ENCODE measurements at regions of chr7 and their contacts with region 1.

Region 1: DNA sequence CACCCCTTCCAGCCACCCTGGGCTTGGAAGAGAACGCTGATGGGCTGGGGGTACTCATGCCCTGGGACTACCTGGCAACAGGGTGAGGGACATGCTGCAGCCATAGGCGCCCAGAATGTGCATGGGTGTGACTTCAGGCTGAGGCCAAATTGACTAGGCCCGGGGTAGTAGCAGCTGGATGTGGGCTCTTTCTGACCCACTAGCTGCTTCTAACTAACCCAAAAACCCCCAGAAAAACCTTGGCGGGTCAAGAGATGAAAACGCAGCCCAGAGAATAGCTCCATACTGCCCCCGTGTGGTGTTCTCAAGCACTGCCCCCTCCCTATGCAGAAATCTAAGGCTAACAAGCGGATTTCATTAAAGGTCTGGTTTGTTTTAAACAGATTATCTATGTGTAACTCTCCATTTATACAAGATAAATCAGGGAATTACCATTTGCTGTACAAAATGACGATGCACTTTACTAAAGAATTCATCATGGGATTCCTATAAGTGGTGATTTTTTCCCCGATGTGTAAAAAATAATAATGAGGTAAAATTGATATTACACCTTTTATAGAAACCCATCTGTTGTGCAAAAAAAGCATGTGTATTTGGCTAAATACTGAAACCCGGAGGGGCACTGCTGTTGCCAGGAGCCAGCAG is 4.2 kb downstream of the SMARCD3 start:
- H3K4me3 Mint-ChIP-seq: no peak overlapping the region
- H3K27ac Mint-ChIP-seq: no peak overlapping the region
- H3K4me1 Mint-ChIP-seq: peaks cover 31% of the 10 kb centered on the region
- H3K27me3 Mint-ChIP-seq: peaks cover 56% of the 10 kb centered on the region

Region 2: GRCh38 chr7:151226875-151227782 is 17.2 kb before region 1 on chr7 and contains the start of gene ABCF2:
- intact Hi-C with region 1: loop called (anchors 2 kb)
- H3K4me3 Mint-ChIP-seq: peak within 1 kb of the TSS; percentile 96
- H3K27ac Mint-ChIP-seq: peak within 1 kb of the TSS; percentile 93
- H3K4me1 Mint-ChIP-seq: peaks cover 45% of the 10 kb centered on the region
- H3K27me3 Mint-ChIP-seq: peaks cover 1% of the 10 kb centered on the region

Region 3: GRCh38 chr7:151304856-151305255 is 60.5 kb after region 1 on chr7:
- intact Hi-C with region 1: loop called (anchors 1 kb)
- H3K4me3 Mint-ChIP-seq: no peak overlapping the region
- H3K27ac Mint-ChIP-seq: no peak overlapping the region
- H3K4me1 Mint-ChIP-seq: peaks cover 13% of the 10 kb centered on the region
- H3K27me3 Mint-ChIP-seq: peaks cover 70% of the 10 kb centered on the region